ENCODE measurements at regions of chr20 and their contacts with region 1.

Region 1: GRCh38 chr20:19784511-19785172 is 26.6 kb downstream of the RIN2 start:
- DNase-seq: peak; percentile 91
- ATAC-seq: peak; percentile 74
- H3K4me3 ChIP-seq: no peak overlapping the region
- H3K27ac ChIP-seq: peak overlapping the region; percentile 94
- H3K4me1 ChIP-seq: peaks cover 22% of the 10 kb centered on the region
- H3K27me3 ChIP-seq: no peaks in the 10 kb centered on the region
- CTCF ChIP-seq: peak; percentile 87
- POLR2A ChIP-seq: peak; percentile 39; the same call in 1 of the 2 replicates
- RAD21 ChIP-seq: peak; percentile 97

Region 2: DNA sequence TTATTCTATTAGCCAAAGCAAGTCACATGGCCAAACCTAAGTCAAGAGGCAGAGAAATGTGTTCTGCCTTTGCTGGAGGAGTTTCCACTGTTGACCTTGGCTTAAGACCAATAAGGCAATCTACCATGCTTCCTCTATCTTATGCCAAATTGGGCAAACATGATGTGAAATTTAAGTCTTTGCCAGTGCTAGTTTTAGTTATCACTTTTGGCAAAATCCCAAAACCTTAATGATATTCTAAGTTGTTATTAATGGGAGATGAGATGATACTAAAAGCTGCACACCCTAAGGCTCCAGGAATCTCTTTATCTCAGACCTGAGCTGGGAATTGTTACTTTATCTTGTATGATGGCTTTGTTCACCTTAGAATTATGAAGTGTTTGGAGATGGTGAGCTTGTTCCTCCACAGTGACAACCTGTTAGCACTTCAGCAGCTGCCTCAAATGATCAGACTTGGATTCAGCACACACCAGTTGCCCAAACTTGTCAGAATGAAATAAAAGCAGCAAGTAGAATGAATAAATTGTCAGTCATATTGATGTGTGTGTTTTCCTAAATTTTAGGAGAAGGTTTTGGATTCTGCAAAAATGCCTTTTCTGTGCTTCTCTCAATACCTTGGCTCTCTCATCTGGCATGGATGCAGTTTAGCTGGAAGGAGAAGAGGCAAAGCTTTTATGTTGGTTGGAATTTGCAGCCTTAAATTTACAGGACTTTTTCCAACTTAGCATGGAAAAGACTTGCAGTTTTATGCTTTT is 22.7 kb after region 1 on chr20:
- CTCF ChIA-PET with region 1: interaction called, 10 read pairs
- POLR2A ChIA-PET with region 1: no interaction called
- dilution Hi-C with region 1: no loop called
- in situ Hi-C with region 1: no loop called
- intact Hi-C with region 1: no loop called
- DNase-seq: peak; percentile 35
- ATAC-seq: no peak
- H3K4me3 ChIP-seq: no peak overlapping the region
- H3K27ac ChIP-seq: peak overlapping the region; percentile 56; the same call in 1 of the 2 replicates
- H3K4me1 ChIP-seq: peaks cover 20% of the 10 kb centered on the region
- H3K27me3 ChIP-seq: no peaks in the 10 kb centered on the region
- CTCF ChIP-seq: no peak
- POLR2A ChIP-seq: no peak
- RAD21 ChIP-seq: no peak

Region 3: DNA sequence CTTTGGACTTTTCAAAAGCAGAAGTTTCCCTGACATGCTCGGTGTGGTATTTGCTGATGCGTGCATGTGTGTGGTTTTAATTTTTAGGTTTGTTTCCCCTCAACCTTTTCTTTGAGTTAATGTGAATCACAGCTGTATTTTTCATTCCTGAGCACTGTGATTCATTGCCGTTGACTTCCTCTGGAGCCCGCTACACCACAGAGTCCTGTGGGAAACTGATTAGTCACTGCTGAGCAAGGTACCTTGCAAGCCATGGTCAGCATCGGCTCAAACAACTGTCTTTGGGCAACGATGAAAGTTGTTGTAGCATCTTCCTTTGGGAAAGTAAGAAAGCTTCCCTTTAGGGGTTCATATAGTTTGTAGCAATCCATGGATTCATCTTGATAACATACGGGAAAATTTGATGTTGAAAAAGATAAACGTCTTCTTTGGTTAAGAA is 30.9 kb after region 1 on chr20:
- CTCF ChIA-PET with region 1: interaction called, 4 read pairs
- POLR2A ChIA-PET with region 1: no interaction called
- dilution Hi-C with region 1: no loop called
- in situ Hi-C with region 1: no loop called
- intact Hi-C with region 1: loop called (anchors 2 kb)
- DNase-seq: peak; percentile 99
- ATAC-seq: peak; percentile 86
- H3K4me3 ChIP-seq: no peak overlapping the region
- H3K27ac ChIP-seq: peak overlapping the region; percentile 87
- H3K4me1 ChIP-seq: peaks cover 22% of the 10 kb centered on the region
- H3K27me3 ChIP-seq: no peaks in the 10 kb centered on the region
- CTCF ChIP-seq: no peak
- POLR2A ChIP-seq: peak; percentile 68; the same call in 1 of the 2 replicates
- RAD21 ChIP-seq: peak; percentile 25; the same call in 1 of the 2 replicates

Region 4: GRCh38 chr20:19889011-19889953 is 104.6 kb after region 1 on chr20:
- CTCF ChIA-PET with region 1: interaction called, 3 read pairs
- POLR2A ChIA-PET with region 1: interaction called, 5 read pairs
- dilution Hi-C with region 1: no loop called
- in situ Hi-C with region 1: loop called (anchors 5 kb)
- intact Hi-C with region 1: loop called (anchors 1 kb)
- DNase-seq: peak; percentile 76
- ATAC-seq: peak; percentile 46
- H3K4me3 ChIP-seq: peak overlapping the region; percentile 57
- H3K27ac ChIP-seq: peak overlapping the region; percentile 100
- H3K4me1 ChIP-seq: peaks cover 33% of the 10 kb centered on the region
- H3K27me3 ChIP-seq: no peaks in the 10 kb centered on the region
- CTCF ChIP-seq: no peak
- POLR2A ChIP-seq: no peak
- RAD21 ChIP-seq: no peak

Region 5: GRCh38 chr20:19974626-19975435 is 190.2 kb after region 1 on chr20:
- CTCF ChIA-PET with region 1: no interaction called
- POLR2A ChIA-PET with region 1: no interaction called
- dilution Hi-C with region 1: no loop called
- in situ Hi-C with region 1: loop called (anchors 10 kb)
- intact Hi-C with region 1: loop called (anchors 1 kb)
- DNase-seq: peak; percentile 97
- ATAC-seq: peak; percentile 66
- H3K4me3 ChIP-seq: peak overlapping the region; percentile 71
- H3K27ac ChIP-seq: peak overlapping the region; percentile 92
- H3K4me1 ChIP-seq: peaks cover 20% of the 10 kb centered on the region
- H3K27me3 ChIP-seq: no peaks in the 10 kb centered on the region
- CTCF ChIP-seq: no peak
- POLR2A ChIP-seq: peak; percentile 68
- RAD21 ChIP-seq: no peak; the same call in 1 of the 2 replicates

Region 6: GRCh38 chr20:19995220-19995863 is 210.7 kb after region 1 on chr20:
- CTCF ChIA-PET with region 1: no interaction called
- POLR2A ChIA-PET with region 1: no interaction called
- dilution Hi-C with region 1: no loop called
- in situ Hi-C with region 1: no loop called
- intact Hi-C with region 1: loop called (anchors 1 kb)
- DNase-seq: peak; percentile 64
- ATAC-seq: peak; percentile 21
- H3K4me3 ChIP-seq: no peak overlapping the region
- H3K27ac ChIP-seq: peak overlapping the region; percentile 79; the same call in 1 of the 2 replicates
- H3K4me1 ChIP-seq: peaks cover 28% of the 10 kb centered on the region
- H3K27me3 ChIP-seq: no peaks in the 10 kb centered on the region
- CTCF ChIP-seq: peak; percentile 81
- POLR2A ChIP-seq: no peak
- RAD21 ChIP-seq: peak; percentile 70

Measured in IMR-90 (cell line).